GM10248 (cell line): ENCODE measurements at regions of chr17 and their contacts with region 1.

Region 1: GRCh38 chr17:40355123-40355803 is 9.3 kb downstream of the GJD3 start:
- DNase-seq: peak; percentile 84
- CTCF ChIP-seq: peak; percentile 92

Region 2: DNA sequence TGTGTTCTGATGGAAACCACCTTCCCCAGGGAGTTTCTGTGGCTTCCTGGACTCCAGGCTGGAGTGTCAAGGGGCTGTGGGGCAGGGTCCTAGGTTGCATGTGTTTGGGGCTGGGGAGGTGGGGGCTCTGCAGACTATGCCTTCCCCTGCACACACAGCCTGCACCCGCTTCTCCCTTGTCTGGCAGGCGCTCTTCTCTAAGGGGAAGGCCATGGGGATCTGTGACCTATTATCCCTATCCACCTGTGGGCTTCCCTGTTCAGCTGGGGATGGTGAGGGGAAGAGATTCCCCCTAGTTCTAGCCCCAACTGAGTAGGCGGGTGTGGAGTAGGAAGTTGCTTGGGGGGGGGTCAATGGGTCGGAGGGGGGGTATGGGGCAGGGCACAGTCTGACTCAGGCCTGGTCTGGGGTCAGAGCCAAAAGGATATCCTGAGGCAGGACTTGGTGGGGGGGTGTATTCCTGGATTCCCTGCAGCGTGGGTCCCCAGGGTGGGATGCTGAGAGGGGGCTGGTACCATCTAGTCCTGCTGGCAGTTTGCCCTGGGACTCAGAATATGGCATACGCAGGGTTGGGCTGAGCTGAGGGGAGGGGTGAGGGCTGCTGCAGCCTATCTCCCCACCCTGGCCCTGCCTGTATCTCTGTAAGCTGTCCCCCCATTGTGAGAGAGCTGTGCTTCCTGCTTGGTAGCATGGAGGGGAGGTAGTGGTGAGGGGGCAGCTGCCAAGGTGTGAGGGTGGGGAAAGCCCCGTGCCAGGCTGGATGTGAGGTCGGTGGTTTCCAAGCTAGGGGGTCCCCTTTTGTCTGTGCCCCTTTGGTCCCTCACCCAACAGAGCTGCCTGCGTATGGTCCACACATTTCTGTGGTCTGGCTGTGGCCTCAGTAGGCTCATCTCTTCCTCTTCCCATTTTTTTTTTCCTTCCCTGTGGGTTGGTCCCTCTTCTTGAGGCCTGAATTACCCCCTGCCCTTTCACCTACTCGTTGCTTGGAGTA is 31.6 kb before region 1 on chr17:
- CTCF ChIA-PET with region 1: interaction called, 604 read pairs
- POLR2A ChIA-PET with region 1: no interaction called
- DNase-seq: no peak
- CTCF ChIP-seq: no peak

Region 3: DNA sequence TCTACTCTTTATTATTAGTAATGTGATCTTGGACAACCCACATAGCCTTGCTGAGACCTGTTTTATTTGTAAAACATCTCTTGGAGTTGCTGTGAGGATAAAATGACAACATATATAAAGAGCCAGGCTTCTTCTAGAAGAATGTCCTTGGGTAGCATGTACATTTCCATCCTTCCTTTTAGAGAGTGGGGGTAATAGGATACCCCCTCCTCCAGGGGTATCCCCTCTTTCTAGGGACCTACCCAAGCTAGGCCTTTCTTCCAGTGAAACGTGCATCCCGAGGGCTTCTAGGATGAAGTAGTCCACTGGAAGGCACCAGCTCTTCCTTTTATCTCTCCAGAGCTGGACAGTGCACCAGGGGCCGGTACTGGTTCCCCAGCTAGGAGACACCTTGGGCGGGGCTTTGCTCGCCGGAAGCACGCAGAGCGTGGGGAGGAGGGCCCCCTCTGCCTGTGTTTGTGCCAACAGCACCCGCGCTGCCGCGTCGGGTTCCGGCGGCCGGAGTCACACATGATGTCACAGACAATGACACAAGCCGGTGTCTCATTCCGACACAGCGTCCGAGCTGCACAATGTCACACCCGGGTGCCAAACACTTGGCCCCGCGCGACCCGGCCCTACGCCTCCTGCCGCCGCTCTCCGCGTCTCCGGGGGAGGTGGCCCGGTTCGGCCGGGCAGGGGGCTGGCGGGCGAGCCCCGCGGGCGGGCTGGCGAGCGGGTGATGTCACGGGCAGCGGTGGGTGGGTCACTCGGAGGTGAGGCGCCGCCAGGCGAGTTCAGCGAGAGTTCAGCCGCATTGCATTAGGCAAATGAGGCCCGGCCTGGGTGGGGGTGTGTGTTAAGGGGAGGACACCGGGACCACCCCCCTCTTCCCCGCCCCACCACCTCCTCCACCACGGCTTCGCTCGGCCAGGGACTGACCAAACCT is 14.1 kb before region 1 on chr17:
- CTCF ChIA-PET with region 1: interaction called, 46 read pairs
- POLR2A ChIA-PET with region 1: no interaction called
- DNase-seq: peak; percentile 83
- CTCF ChIP-seq: no peak

Region 4: DNA sequence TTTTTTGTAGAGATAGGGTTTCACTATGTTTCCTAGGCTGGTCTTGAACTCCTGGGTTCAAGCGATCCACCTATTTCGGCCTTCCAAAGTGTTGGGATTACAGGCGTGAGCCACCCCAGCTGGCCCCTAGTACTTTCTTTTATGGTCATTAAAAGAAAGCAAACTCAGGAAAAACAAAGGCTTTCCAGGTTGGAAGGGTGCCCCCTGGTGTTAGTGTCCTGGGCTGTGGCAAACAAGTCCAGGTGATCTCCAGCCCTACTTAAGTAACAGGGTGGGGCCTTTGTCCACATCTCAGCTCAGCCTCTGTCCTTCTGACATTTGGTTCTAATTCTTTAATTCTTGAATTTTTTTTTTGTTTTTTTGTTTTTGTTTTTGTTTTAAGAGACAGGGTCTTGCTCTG is 94.9 kb after region 1 on chr17:
- CTCF ChIA-PET with region 1: interaction called, 10 read pairs
- POLR2A ChIA-PET with region 1: no interaction called
- DNase-seq: peak; percentile 52
- CTCF ChIP-seq: peak; percentile 32